Heart right ventricle (tissue), 16 donors: ENCODE measurements at regions of chr14 and their contacts with region 1.

Region 1: DNA sequence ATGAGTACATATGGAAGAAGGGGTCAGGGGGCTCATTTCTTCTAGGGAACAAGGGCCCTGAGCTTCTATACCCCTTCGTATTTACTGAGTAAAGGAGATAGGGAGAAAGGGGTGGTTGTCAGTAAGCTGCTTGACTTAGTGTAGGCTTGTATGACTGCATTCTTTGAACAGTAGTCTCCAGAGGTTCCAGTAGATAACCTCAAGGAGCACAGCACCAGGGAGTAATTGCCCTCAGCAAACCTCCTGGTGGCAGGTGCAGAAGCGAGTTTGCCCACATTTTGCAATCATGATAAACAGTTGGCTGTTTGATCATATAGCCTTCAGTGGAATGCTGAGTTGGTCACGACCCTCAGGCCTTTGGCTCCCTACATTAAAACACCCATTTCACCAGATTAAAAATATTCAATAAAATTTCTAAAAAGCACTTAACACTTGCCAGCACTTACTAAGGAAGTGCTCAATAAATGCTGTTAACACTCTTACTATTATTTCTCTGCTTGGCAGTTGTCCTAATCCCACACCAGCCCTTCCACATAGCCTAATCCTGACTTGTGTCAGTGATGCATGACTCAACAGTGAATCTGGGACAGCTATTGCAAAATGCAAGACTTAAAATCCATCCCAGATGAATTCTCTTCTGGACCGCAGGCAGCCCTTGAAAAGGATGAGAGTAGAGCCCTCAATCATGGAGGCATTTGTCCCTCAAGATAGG is 3.7 kb upstream of the DHRS4L2 start:
- DNase-seq: no peak
- ATAC-seq: peak in 4 of 8 donors; percentile 7 to 44 (median 34)
- H3K4me3 ChIP-seq: no peak overlapping the region
- H3K27ac ChIP-seq: peak overlapping the region in 2 of 10 donors; percentile 5 to 26
- H3K4me1 ChIP-seq: peaks cover 0 to 41% (median 13%) of the 10 kb centered on the region in 9 donors
- H3K27me3 ChIP-seq: no peaks in the 10 kb centered on the region
- CTCF ChIP-seq: no peak

Region 2: DNA sequence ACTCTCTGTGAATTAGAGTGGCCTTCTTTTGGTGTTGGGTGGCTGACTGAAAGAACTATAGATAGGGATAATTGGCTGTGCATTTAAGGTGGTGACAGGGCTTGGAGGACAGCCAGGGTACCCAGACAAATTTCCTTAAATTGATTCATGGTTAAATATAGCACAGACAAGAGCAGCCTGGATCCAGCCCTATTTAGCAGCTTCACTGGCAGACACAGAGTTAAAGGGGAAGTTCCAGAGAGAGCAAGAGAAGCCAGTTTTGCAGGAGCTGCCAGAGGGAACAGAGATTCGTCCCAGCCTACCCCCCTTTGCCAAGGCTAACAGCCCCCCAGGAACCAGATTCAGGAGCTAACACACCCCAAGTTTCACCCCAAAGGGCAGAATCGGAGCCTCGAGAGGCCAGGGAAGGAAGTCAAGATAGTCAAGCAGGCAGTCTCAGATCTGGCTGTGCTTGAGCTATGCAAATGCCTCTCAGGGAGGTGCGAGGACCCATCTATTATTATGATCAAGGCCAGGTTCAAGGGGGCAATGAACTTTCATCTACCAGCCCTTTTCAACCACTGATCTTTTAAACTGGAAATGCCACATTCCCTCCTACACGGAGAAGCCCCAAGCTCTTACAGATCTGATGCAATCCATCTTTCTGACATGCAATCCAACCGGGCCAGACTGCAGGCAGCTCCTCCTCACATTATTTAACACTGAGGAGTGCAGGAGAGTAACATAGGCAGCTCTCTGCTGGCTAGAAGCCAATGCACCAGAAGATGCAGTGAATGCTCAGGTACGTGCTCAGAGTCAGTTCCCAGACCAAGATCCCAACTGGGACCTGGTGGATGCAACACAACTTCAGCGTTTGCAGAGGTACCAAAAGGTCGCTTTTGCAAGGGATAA is 290.7 kb before region 1 on chr14:
- intact Hi-C with region 1: no loop called
- DNase-seq: no peak
- ATAC-seq: peak; percentile 18 to 90 (median 54)
- H3K4me3 ChIP-seq: peak overlapping the region in 6 of 10 donors; percentile 28 to 52 (median 48)
- H3K27ac ChIP-seq: no peak overlapping the region
- H3K4me1 ChIP-seq: peaks cover 0 to 25% (median 21%) of the 10 kb centered on the region in 9 donors
- H3K27me3 ChIP-seq: peaks cover 0 to 10% (median 0%) of the 10 kb centered on the region in 7 donors
- CTCF ChIP-seq: no peak

Region 3: GRCh38 chr14:24036169-24036962 is 51.3 kb after region 1 on chr14:
- intact Hi-C with region 1: loop called in 2 of 10 experiments (anchors 5 kb)
- DNase-seq: peak; percentile 79 to 86
- ATAC-seq: peak; percentile 95 to 98 (median 96)
- H3K4me3 ChIP-seq: peak overlapping the region; percentile 32 to 83 (median 71)
- H3K27ac ChIP-seq: peak overlapping the region; percentile 63 to 96 (median 94)
- H3K4me1 ChIP-seq: peaks cover 0 to 25% (median 4%) of the 10 kb centered on the region in 9 donors
- H3K27me3 ChIP-seq: no peaks in the 10 kb centered on the region
- CTCF ChIP-seq: peak; percentile 69 to 85 (median 74)

Region 4: DNA sequence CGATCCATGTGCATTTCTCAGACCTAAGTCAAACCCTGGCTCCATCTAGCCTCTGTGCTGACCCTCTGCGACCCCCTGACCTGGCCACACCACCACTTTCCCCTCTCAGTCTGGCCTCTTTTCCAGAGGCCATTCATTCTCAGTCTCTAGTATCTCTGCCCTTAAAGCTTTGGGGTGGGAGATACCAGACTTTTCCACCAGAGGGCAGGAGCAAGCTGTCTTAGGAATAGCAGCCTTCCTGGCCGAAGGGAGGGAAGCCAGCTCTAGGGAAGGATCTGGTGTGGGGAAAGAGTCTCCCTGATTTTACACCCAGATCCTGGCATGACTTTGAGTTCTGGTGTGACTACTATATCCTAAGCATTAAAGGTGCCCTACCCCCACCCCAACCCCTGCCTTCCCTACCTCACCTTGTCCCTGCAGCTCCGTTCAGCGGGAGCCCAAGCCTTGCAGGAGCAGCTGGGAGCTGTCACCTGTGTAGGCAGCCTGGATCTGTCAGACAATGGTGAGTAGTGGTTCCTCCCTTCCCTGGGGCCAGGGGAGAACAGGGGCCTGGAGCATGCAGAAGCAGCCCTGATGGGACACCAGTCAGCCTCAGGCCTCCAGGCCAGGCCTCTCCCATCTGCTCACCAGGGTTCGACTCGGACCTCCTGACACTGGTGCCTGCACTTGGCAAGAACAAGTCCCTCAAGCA is 73.4 kb after region 1 on chr14:
- intact Hi-C with region 1: no loop called
- DNase-seq: peak; percentile 29 to 42
- ATAC-seq: peak; percentile 68 to 91 (median 83)
- H3K4me3 ChIP-seq: no peak overlapping the region
- H3K27ac ChIP-seq: no peak overlapping the region
- H3K4me1 ChIP-seq: peaks cover 0 to 3% (median 0%) of the 10 kb centered on the region in 9 donors
- H3K27me3 ChIP-seq: peaks cover 0 to 6% (median 0%) of the 10 kb centered on the region in 7 donors
- CTCF ChIP-seq: peak; percentile 48 to 94 (median 77)

Region 5: GRCh38 chr14:24080888-24081738 is 96.1 kb after region 1 on chr14:
- intact Hi-C with region 1: loop called in 1 of 10 experiments (anchors 10 kb)
- DNase-seq: peak; percentile 31 to 48
- ATAC-seq: peak; percentile 61 to 80 (median 75)
- H3K4me3 ChIP-seq: peak overlapping the region; percentile 8 to 64 (median 60)
- H3K27ac ChIP-seq: peak overlapping the region in 5 of 10 donors; percentile 18 to 77 (median 45)
- H3K4me1 ChIP-seq: peaks cover 0 to 12% (median 6%) of the 10 kb centered on the region in 9 donors
- H3K27me3 ChIP-seq: peaks cover 0 to 39% (median 4%) of the 10 kb centered on the region in 7 donors
- CTCF ChIP-seq: no peak

Region 6: DNA sequence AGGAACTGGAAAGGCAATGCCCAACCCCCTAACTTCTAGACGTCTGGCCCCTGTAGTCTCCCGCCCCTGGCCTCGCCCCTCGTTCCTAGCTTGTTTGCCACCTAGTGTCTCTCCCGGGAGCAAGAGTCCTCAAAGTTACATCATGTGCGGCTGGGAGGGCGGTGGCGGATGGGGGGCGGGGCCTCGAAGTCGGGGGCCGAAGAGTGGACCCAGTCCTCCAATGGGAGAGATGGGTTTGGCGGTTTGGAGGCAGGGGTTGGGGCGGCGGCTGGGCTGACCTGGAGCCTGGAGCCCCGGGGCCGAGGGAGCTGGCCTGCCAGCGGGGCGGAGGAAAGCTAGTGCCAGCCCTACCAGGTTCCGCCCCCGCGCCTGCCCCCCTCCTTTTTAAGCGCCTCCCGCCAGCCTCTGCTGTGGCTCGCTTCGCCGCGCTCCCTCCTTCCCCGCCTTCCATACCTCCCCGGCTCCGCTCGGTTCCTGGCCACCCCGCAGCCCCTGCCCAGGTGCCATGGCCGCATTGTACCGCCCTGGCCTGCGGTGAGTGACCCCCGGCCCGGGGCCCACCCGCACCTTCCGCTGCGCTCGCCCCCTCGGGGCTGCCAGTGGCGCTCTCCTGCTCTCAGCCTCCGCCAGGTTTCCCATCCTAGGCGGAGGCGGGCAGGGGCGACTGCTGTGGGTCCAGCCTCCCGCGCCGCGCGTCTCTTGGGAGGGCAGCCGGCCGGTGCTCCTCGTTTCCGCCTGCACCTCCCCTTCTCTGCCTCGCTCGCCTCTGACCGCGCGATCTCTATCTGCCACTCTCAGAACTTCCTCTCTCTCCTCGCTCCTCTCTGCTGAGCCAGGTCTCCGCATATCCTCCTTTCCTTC is 109.1 kb after region 1 on chr14 and contains the start of gene PCK2:
- intact Hi-C with region 1: loop called in 2 of 10 experiments (anchors 10 kb)
- DNase-seq: peak; percentile 85 to 90
- ATAC-seq: peak; percentile 84 to 91 (median 88)
- H3K4me3 ChIP-seq: peak within 1 kb of the TSS; percentile 61 to 95 (median 87)
- H3K27ac ChIP-seq: peak within 1 kb of the TSS; percentile 74 to 95 (median 91)
- H3K4me1 ChIP-seq: peaks cover 3 to 38% (median 21%) of the 10 kb centered on the region in 9 donors
- H3K27me3 ChIP-seq: no peaks in the 10 kb centered on the region
- CTCF ChIP-seq: peak in 2 of 9 donors; percentile 15 to 23
- total RNA-seq, gene PCK2: 0.75 to 6.8 (median 2.6) TPM

Region 7: GRCh38 chr14:24108336-24108874 is 123.4 kb after region 1 on chr14:
- intact Hi-C with region 1: loop called in 1 of 10 experiments (anchors 10 kb)
- DNase-seq: no peak
- ATAC-seq: peak in 2 of 8 donors; percentile 7 to 25
- H3K4me3 ChIP-seq: no peak overlapping the region
- H3K27ac ChIP-seq: peak overlapping the region in 5 of 10 donors; percentile 6 to 77 (median 12)
- H3K4me1 ChIP-seq: peaks cover 0 to 24% (median 7%) of the 10 kb centered on the region in 9 donors
- H3K27me3 ChIP-seq: no peaks in the 10 kb centered on the region
- CTCF ChIP-seq: no peak

Region 8: DNA sequence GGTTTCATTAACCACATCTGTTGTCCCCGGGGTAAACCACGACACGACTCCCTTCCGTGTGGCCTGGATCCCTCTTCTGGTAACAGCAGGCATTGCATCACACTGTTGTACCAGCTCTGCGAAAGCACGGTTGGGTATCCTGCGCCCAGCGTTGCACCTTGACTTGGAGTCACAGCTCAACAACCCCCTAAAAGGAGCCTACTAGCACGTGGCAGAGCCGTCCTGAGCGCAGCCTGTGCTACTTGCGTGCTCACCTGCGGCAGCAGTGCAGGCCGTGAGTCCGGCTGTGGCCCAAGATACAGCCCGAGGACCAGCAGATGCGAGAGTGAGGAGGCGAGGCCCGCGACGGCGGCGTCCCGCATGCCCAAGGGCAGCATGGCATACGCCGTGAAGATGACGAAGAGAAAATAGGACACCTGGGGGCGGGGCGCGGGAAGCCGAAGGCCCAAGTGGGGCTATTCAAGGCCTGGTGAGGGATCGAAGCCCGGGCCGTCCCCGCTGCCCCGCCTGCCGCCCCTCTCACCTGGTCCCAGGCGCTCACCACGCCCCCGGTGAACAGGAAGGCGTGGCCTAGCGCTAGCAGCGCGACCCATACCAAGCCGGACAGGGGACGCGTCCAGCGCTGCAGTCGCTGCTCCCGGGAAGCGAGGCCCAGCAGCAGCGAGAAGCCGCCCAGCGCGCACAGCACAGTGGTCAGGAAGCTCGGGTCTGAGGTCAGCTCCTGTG is 347.4 kb after region 1 on chr14:
- intact Hi-C with region 1: no loop called
- DNase-seq: peak; percentile 43 to 68
- ATAC-seq: peak in 7 of 8 donors; percentile 31 to 56 (median 51)
- H3K4me3 ChIP-seq: peak overlapping the region in 9 of 10 donors; percentile 14 to 88 (median 70)
- H3K27ac ChIP-seq: peak overlapping the region in 3 of 10 donors; percentile 15 to 97 (median 90)
- H3K4me1 ChIP-seq: peaks cover 6 to 92% (median 37%) of the 10 kb centered on the region in 9 donors
- H3K27me3 ChIP-seq: peaks cover 0 to 35% (median 24%) of the 10 kb centered on the region in 7 donors
- CTCF ChIP-seq: peak; percentile 43 to 75 (median 68)